Prostate gland (tissue), 2 donors: ENCODE measurements at regions of chr16 and their contacts with region 1.

Region 1: DNA sequence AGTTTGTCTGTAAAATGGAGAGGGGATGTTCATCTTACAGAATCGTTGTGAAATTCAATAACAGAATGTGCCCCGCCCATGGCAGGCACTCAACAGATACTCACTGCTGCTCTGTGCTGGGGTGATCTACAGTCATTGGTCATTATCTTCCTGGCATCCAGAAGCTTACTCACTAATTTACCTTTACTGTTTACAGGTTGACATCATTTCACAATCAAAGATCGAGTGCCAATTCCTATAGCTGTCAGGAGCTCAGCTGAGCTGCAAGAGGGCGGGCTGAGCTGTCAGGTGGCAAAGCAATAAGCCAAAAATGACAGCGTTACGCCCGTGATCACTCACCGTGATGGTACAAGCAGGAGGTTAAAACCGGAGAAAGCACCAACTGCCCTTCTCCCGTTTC is 51.2 kb downstream of the LITAF start:
- DNase-seq: peak; percentile 57
- H3K4me3 ChIP-seq: no peak overlapping the region
- H3K27ac ChIP-seq: peak overlapping the region; percentile 36 to 39
- H3K4me1 ChIP-seq: peaks cover 5% of the 10 kb centered on the region
- H3K27me3 ChIP-seq: no peaks in the 10 kb centered on the region
- CTCF ChIP-seq: no peak
- POLR2A ChIP-seq: no peak

Region 2: GRCh38 chr16:11506741-11507305 is 28.6 kb before region 1 on chr16:
- intact Hi-C with region 1: no loop called
- DNase-seq: no peak
- H3K4me3 ChIP-seq: no peak overlapping the region
- H3K27ac ChIP-seq: peak overlapping the region; percentile 42 to 73
- H3K4me1 ChIP-seq: no peaks in the 10 kb centered on the region
- H3K27me3 ChIP-seq: no peaks in the 10 kb centered on the region
- CTCF ChIP-seq: peak in 2 of 4 experiments; percentile 11
- POLR2A ChIP-seq: no peak

Region 3: GRCh38 chr16:11639925-11640899 is 104.7 kb after region 1 on chr16:
- intact Hi-C with region 1: loop called (anchors 5 kb)
- DNase-seq: peak; percentile 86
- H3K4me3 ChIP-seq: no peak overlapping the region
- H3K27ac ChIP-seq: peak overlapping the region; percentile 76 to 91
- H3K4me1 ChIP-seq: no peaks in the 10 kb centered on the region
- H3K27me3 ChIP-seq: no peaks in the 10 kb centered on the region
- CTCF ChIP-seq: no peak
- POLR2A ChIP-seq: peak; percentile 73

Region 4: DNA sequence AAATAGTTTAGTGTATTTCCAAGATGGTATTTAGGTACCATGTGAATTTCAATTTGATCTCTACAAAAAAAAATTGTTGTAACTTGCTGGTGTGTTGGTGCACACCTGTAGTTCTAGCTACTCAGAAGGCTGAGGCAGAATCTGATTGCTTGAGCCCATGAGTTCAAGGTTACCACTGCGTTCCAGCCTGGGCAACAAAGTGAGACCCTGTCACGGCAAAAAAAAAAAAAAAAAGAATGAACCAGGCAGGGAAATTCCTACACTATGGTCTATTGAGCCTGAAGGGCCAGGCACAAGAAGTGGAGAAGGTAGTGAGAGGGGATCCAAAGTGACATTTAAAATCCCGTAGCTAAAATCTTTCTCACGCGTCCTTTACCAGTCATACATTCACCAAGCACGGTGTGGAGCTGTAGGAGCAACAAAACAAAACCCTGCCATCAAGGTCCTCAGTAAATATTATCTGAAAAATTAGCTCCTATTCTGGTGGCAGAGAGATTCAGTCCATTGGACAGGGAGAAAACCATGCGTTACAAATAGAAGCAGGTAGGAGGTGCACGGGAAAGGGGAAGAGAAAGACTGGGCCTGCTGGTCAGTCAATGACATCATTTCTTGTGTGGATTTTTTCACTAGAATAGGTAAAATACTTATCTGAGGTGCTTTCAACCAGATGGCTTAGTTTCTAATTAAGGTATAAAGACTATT is 179.9 kb after region 1 on chr16:
- intact Hi-C with region 1: loop called (anchors 5 kb)
- DNase-seq: no peak
- H3K4me3 ChIP-seq: no peak overlapping the region
- H3K27ac ChIP-seq: peak overlapping the region in 1 of 2 donors; percentile 44
- H3K4me1 ChIP-seq: no peaks in the 10 kb centered on the region
- H3K27me3 ChIP-seq: no peaks in the 10 kb centered on the region
- CTCF ChIP-seq: peak in 1 of 4 experiments; percentile 7
- POLR2A ChIP-seq: no peak